ENCODE measurements at regions of chr5 and their contacts with region 1.

Region 1: DNA sequence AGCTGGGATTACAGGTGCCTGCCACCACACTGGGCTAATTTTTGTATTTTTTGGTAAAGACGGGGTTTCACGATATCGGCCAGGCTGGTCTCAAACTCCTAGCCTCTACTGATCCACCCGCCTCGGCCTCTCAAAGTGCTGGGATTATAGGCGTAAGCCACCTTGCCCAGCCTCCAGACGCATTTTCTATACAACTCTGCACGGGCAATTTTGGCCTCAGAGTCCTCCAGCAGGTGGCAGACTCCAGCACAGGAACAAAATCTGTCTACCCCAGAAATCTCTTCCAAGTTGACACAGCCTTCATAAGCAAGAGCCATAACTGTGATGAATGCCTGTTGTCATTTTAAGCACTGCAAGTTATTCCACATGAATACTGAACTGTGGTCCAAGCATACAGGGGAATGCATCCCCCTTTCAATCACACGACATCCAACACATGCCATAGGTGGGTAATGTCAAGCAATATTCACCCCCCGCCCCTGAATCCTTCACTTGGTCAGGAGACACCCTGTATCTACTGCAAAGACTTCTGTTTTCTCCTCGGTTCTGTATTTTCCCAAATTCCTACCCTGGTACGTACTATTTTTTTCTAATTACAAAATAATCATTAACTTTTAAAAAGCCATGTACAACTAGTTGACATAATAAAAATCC is 50.8 kb downstream of the ALDH7A1 start:
- DNase-seq: no peak
- H3K4me3 ChIP-seq: no peak overlapping the region
- H3K27ac ChIP-seq: no peak overlapping the region
- H3K4me1 ChIP-seq: no peaks in the 10 kb centered on the region
- H3K27me3 ChIP-seq: no peaks in the 10 kb centered on the region
- CTCF ChIP-seq: peak; percentile 54

Region 2: DNA sequence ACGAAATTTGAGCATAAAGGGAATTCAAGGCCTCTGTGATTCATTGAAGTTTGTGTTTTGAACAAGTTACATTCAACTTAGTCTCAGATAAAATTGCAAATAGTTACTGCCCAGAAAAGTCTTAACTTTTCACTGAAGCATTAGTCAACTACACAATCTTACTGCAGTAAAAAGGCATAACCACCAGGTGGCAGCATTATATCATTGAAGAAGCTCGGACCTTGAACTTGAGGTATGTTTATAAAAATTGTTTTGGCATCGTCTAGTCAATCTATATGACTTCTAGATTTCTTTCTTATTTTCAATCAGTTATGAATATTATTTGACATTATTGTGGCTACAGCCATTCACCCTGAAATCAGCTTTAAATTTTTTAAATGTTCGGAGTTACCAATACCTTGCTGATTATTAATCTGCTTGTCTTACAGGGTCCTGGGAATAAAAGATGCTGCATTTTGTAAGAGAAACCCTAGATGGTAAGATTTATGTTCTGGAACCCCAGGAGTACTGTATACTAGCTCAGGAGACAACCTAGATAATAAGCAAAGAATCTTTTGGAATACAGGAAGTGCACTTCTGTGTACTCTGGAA is 204.9 kb before region 1 on chr5:
- CTCF ChIA-PET with region 1: interaction called, 35 read pairs
- POLR2A ChIA-PET with region 1: no interaction called
- intact Hi-C with region 1: loop called (anchors 1 kb)
- DNase-seq: peak; percentile 30 to 50
- H3K4me3 ChIP-seq: no peak overlapping the region
- H3K27ac ChIP-seq: no peak overlapping the region
- H3K4me1 ChIP-seq: peaks cover 8% of the 10 kb centered on the region; the same call in 1 of the 2 replicates
- H3K27me3 ChIP-seq: no peaks in the 10 kb centered on the region
- CTCF ChIP-seq: peak; percentile 93

Region 3: DNA sequence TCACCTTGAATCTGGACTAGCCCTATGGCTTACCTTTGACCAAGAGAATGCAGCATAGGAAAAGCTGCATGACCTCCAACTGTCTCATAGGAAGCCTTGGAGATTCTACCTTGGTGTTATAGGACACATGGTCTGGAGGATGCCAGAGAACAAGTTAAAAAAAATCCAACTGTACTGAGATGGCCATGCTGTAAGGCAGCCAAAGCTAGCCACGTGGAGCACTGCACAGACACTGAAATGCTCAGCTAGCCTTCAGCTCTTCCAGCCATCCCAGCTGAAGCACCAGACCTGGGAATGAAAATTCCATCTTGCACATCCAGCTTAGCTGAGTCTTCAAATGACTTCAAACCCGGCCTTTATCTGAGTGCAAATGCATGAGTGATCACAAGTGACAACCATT is 127.0 kb before region 1 on chr5:
- CTCF ChIA-PET with region 1: no interaction called
- POLR2A ChIA-PET with region 1: no interaction called
- intact Hi-C with region 1: no loop called
- DNase-seq: no peak
- H3K4me3 ChIP-seq: no peak overlapping the region
- H3K27ac ChIP-seq: no peak overlapping the region
- H3K4me1 ChIP-seq: 0 out of 2 replicates have a peak, but pooled peaks cover under 1% of the 10 kb centered on the region
- H3K27me3 ChIP-seq: no peaks in the 10 kb centered on the region
- CTCF ChIP-seq: no peak

Region 4: DNA sequence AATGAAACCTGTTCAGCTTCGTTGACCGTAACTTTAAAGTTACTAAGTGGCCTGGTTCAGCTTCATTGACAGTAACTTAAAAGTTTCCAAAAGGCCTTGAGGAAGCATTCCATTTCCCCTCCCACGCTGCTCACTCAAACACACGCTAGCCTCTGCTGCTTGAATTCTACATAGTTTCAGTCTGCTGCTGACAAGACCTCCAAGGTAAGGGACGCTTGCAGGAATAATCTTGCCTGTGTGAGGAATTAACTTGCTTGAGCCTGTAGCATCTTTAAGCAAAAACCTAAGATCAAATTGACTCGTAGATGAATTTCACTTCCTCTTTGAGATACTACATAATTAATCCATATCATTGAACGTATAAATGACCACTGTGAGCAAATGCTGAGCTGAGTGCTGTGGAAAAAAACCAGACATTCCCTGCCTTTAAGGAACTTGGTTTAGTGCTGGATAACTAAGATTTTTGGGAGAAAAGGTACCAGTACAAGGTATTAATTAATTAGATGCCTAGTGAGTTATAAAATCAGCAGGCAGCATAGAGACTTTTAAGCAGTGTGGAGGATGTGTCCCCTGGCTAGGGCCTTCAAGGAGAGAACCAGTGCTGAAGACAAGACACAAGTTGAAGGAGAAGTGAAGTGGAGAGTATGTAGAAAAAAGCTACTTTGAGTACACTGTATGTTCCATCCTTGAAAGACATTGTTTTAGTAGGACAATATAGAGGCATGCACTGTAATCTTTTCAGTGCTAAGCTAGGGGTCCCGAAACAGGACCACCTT is 81.8 kb before region 1 on chr5:
- CTCF ChIA-PET with region 1: no interaction called
- POLR2A ChIA-PET with region 1: no interaction called
- intact Hi-C with region 1: no loop called
- DNase-seq: no peak
- H3K4me3 ChIP-seq: no peak overlapping the region
- H3K27ac ChIP-seq: no peak overlapping the region
- H3K4me1 ChIP-seq: no peaks in the 10 kb centered on the region
- H3K27me3 ChIP-seq: no peaks in the 10 kb centered on the region
- CTCF ChIP-seq: no peak

Region 5: DNA sequence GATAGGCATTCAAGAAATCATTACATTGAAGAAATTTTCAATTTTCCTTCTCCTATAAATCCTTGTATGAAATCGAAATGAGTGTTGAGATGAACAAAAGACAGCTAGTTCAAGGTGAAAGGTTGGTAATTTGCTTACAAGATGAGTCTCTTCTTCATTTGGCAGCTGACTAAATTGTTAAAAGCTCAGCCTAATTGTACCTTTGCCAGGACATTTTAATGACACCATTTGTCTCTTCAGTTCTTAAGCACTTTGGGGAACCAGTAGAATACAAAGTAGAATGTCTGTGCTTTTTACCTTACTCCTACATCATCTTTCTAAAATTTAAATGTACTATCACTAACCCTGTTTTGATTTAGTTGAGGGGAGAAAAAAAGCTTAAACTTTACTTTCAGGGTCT is 61.6 kb before region 1 on chr5:
- CTCF ChIA-PET with region 1: no interaction called
- POLR2A ChIA-PET with region 1: interaction called, 12 read pairs
- intact Hi-C with region 1: no loop called
- DNase-seq: no peak
- H3K4me3 ChIP-seq: no peak overlapping the region
- H3K27ac ChIP-seq: no peak overlapping the region
- H3K4me1 ChIP-seq: no peaks in the 10 kb centered on the region
- H3K27me3 ChIP-seq: no peaks in the 10 kb centered on the region
- CTCF ChIP-seq: no peak

Region 6: GRCh38 chr5:126594676-126595485 is 50.7 kb after region 1 on chr5 and contains the start of gene ALDH7A1:
- CTCF ChIA-PET with region 1: interaction called, 14 read pairs
- POLR2A ChIA-PET with region 1: interaction called, 4 read pairs
- intact Hi-C with region 1: loop called (anchors 5 kb)
- DNase-seq: peak; percentile 84 to 91
- H3K4me3 ChIP-seq: peak within 1 kb of the TSS; percentile 68
- H3K27ac ChIP-seq: peak within 1 kb of the TSS; percentile 45
- H3K4me1 ChIP-seq: peaks cover 20% of the 10 kb centered on the region
- H3K27me3 ChIP-seq: no peaks in the 10 kb centered on the region
- CTCF ChIP-seq: peak; percentile 54
- total RNA-seq, gene ALDH7A1: 109 and 111 TPM in 2 replicates

Region 7: DNA sequence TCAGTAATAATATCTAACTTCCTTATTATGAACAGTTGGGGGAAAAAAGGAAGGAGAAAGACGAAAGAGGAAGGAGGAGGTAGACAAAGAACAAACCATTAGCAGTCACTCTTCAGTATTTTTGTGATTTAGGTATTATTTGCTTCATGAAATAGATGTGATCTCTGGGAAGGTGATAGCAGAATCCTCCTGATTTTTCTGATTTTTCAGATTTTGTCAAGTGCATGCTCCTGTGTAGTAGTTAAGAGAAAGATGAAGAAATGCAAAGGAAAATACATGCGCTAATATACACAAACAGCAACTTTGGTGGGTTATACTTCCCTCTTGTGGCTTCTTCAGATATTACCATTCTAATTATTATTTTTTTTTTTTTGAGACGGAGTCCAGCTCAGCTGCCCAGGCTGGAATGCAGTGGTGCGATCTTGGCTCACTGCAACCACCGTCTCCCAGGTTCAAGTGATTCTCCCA is 264.3 kb after region 1 on chr5:
- CTCF ChIA-PET with region 1: interaction called, 4 read pairs
- POLR2A ChIA-PET with region 1: no interaction called
- intact Hi-C with region 1: loop called (anchors 10 kb)
- DNase-seq: no peak
- H3K4me3 ChIP-seq: no peak overlapping the region
- H3K27ac ChIP-seq: no peak overlapping the region
- H3K4me1 ChIP-seq: no peaks in the 10 kb centered on the region
- H3K27me3 ChIP-seq: no peaks in the 10 kb centered on the region
- CTCF ChIP-seq: peak; percentile 71

Region 8: GRCh38 chr5:127705120-127705892 is 1161.1 kb after region 1 on chr5:
- CTCF ChIA-PET with region 1: no interaction called
- POLR2A ChIA-PET with region 1: no interaction called
- intact Hi-C with region 1: no loop called
- DNase-seq: peak in 1 of 2 experiments; percentile 65
- H3K4me3 ChIP-seq: no peak overlapping the region
- H3K27ac ChIP-seq: no peak overlapping the region
- H3K4me1 ChIP-seq: peaks cover 14% of the 10 kb centered on the region
- H3K27me3 ChIP-seq: no peaks in the 10 kb centered on the region
- CTCF ChIP-seq: no peak